ENCODE measurements at regions of chr22 and their contacts with region 1.

Region 1: DNA sequence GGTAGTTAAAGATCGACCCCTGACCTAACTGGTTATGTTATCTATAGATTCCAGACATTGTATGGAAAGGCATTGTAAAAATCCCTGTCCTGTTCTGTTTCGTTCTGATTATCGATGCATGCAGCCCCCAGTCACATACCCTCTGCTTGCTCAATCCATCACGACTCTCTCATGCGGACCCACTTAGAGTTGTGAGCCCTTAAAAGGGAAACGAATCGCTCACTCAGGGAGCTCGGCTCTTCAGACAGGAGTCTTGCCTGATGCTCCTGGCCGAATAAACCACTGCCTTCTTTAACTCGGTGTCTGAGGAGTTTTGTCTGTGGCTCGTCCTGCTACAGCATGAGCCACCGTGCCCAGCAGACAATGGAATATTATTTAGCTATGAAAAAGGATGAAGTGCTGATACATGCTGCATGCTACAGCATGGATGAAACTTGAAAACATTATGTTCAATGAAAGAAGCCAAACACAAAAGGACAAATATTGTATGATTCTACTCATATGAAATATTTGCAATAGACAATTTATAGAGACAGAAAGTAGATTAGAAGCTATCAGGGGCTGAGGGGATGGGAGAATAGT is 12.0 kb upstream of the LGALS2 start:
- DNase-seq: no peak
- H3K4me3 ChIP-seq: peak overlapping the region in 1 of 4 donors; percentile 21
- H3K27ac ChIP-seq: no peak overlapping the region
- H3K4me1 ChIP-seq: peaks cover 0 to 11% (median 3%) of the 10 kb centered on the region in 4 donors
- H3K27me3 ChIP-seq: peaks cover 0 to 22% (median 0%) of the 10 kb centered on the region in 4 donors
- CTCF ChIP-seq: no peak
- EP300 ChIP-seq: no peak
- POLR2A ChIP-seq: no peak

Region 2: GRCh38 chr22:37544955-37545699 is 46.8 kb before region 1 on chr22:
- intact Hi-C with region 1: loop called (anchors 2 kb)
- DNase-seq: no peak
- H3K4me3 ChIP-seq: peak overlapping the region; percentile 20 to 49 (median 31)
- H3K27ac ChIP-seq: peak overlapping the region; percentile 81 to 90 (median 84)
- H3K4me1 ChIP-seq: peaks cover 35 to 51% (median 45%) of the 10 kb centered on the region in 4 donors
- H3K27me3 ChIP-seq: peaks cover 0 to 27% (median 0%) of the 10 kb centered on the region in 4 donors
- CTCF ChIP-seq: peak; percentile 50 to 67 (median 57)
- EP300 ChIP-seq: no peak
- POLR2A ChIP-seq: no peak

Region 3: GRCh38 chr22:37716708-37717107 is 124.8 kb after region 1 on chr22:
- intact Hi-C with region 1: no loop called
- DNase-seq: no peak
- H3K4me3 ChIP-seq: no peak overlapping the region
- H3K27ac ChIP-seq: no peak overlapping the region
- H3K4me1 ChIP-seq: no peaks in the 10 kb centered on the region
- H3K27me3 ChIP-seq: no peaks in the 10 kb centered on the region
- CTCF ChIP-seq: no peak
- EP300 ChIP-seq: no peak
- POLR2A ChIP-seq: no peak

Measured in esophagus muscularis mucosa (tissue), 4 donors.